ENCODE measurements at regions of chr17 and their contacts with region 1.

Region 1: GRCh38 chr17:34637548-34638525 is 58.5 kb downstream of the TMEM132E start:
- DNase-seq: peak; percentile 74 to 78 (median 77)
- H3K4me3 ChIP-seq: peak overlapping the region in 1 of 2 donors; percentile 59
- H3K4me3 Mint-ChIP-seq: peak overlapping the region; percentile 79 to 87 (median 84)
- H3K27ac ChIP-seq: no peak overlapping the region
- H3K27ac Mint-ChIP-seq: peak overlapping the region in 3 of 7 donors; percentile 23 to 80 (median 46)
- H3K4me1 ChIP-seq: peaks cover 14% of the 10 kb centered on the region
- H3K4me1 Mint-ChIP-seq: peaks cover 4 to 6% (median 4%) of the 10 kb centered on the region in 4 donors
- H3K27me3 ChIP-seq: peaks cover 5% of the 10 kb centered on the region
- H3K27me3 Mint-ChIP-seq: peaks cover 10 to 23% of the 10 kb centered on the region in 2 donors

Region 2: GRCh38 chr17:34420254-34420766 is 217.5 kb before region 1 on chr17:
- CTCF ChIA-PET with region 1: interaction called, 5 read pairs
- POLR2A ChIA-PET with region 1: no interaction called
- intact Hi-C with region 1: loop called (anchors 1 kb)
- DNase-seq: peak in 4 of 5 donors; percentile 47 to 59 (median 52)
- H3K4me3 ChIP-seq: no peak overlapping the region
- H3K4me3 Mint-ChIP-seq: no peak overlapping the region
- H3K27ac ChIP-seq: no peak overlapping the region
- H3K27ac Mint-ChIP-seq: no peak overlapping the region
- H3K4me1 ChIP-seq: no peaks in the 10 kb centered on the region
- H3K4me1 Mint-ChIP-seq: peaks cover 0 to 9% (median 3%) of the 10 kb centered on the region in 4 donors
- H3K27me3 ChIP-seq: no peaks in the 10 kb centered on the region
- H3K27me3 Mint-ChIP-seq: peaks cover 19 to 45% of the 10 kb centered on the region in 2 donors

Region 3: DNA sequence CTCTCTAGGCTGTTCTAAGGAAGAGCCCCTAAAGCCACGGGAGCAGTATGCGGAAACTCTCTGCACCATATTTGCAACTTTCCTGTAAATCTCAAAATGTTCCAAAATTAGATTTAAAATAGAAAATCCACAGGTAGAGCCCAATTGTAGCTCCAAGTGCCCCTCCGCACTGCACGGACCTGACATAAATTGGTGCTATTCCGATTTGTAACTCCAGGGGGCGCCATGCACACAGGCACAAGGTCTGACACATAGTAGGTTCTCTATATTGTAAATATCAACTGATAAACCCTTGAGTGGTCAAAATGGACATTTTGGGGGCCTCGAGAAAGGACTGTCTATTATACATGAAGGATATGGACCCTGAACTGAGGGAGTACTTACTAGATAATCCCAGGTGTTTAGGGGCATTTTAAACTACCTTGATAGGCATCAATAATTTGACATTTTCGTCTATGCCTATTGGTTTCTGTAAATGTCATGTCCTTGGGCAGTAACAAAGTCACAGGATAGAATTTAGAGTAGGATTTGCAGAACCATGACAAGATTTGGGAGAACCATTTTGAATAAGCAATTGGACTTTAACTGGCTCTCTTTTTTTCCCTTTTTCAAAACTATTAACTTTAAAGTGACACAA is 95.0 kb before region 1 on chr17:
- CTCF ChIA-PET with region 1: interaction called, 18 read pairs
- POLR2A ChIA-PET with region 1: no interaction called
- intact Hi-C with region 1: loop called (anchors 1 kb)
- DNase-seq: peak in 4 of 5 donors; percentile 41 to 52 (median 48)
- H3K4me3 ChIP-seq: no peak overlapping the region
- H3K4me3 Mint-ChIP-seq: no peak overlapping the region
- H3K27ac ChIP-seq: no peak overlapping the region
- H3K27ac Mint-ChIP-seq: no peak overlapping the region
- H3K4me1 ChIP-seq: no peaks in the 10 kb centered on the region
- H3K4me1 Mint-ChIP-seq: no peaks in the 10 kb centered on the region
- H3K27me3 ChIP-seq: no peaks in the 10 kb centered on the region
- H3K27me3 Mint-ChIP-seq: peaks cover 17 to 26% of the 10 kb centered on the region in 2 donors

Region 4: DNA sequence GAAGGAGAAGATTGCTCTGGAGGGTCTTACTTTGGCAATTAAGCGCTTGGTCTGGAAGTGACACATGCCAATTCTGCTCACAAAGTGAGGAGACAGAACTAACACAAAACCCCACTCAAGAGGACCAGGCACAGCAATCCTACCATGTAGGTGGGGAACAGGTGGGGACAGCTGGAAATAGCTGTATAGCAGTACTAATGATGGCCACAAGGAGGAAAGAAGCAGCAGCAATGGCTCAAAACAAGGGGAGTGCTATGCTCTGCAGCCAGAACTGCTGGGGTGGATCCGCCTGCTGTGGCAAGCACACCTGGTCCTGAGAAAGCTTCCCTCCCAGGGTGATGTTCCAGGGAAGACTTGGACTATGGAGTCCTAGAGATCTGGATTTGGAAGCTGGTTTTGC is 75.5 kb before region 1 on chr17:
- CTCF ChIA-PET with region 1: interaction called, 8 read pairs
- POLR2A ChIA-PET with region 1: no interaction called
- intact Hi-C with region 1: loop called (anchors 1 kb)
- DNase-seq: peak in 1 of 5 donors; percentile 22
- H3K4me3 ChIP-seq: no peak overlapping the region
- H3K4me3 Mint-ChIP-seq: no peak overlapping the region
- H3K27ac ChIP-seq: no peak overlapping the region
- H3K27ac Mint-ChIP-seq: no peak overlapping the region
- H3K4me1 ChIP-seq: no peaks in the 10 kb centered on the region
- H3K4me1 Mint-ChIP-seq: no peaks in the 10 kb centered on the region
- H3K27me3 ChIP-seq: peaks cover 14% of the 10 kb centered on the region
- H3K27me3 Mint-ChIP-seq: peaks cover 12 to 19% of the 10 kb centered on the region in 2 donors

Region 5: DNA sequence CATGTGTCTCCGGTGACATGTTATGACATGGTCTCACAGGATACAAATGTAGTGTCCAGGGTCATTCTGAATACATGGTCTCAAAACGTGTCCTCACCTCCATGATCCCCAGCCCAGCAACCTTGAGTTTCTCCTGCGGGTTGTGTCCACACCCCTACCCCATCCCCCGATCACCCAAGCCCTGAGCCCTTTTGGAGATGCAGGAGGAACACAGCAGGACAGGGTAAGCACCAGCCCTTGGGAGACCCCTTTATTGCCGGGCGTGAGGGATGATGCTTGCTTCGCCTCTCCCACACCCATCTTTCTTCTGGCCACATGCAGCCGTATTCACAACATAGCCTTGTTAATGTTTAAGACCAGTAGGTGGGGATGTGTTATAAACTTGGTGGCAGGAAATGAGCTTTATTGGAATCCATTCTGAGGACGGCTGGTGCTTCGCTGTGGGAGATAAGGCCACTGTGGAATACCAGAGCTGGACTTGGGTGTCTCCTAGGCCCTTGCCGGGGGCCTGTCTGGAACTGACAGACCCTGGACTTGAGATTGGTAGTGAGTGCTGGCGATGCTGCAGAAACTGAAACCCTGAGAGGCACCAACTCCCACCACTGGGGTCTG is 52.9 kb before region 1 on chr17:
- CTCF ChIA-PET with region 1: interaction called, 4 read pairs
- POLR2A ChIA-PET with region 1: no interaction called
- intact Hi-C with region 1: loop called (anchors 1 kb)
- DNase-seq: peak in 2 of 5 donors; percentile 10 to 16
- H3K4me3 ChIP-seq: no peak overlapping the region
- H3K4me3 Mint-ChIP-seq: no peak overlapping the region
- H3K27ac ChIP-seq: no peak overlapping the region
- H3K27ac Mint-ChIP-seq: no peak overlapping the region
- H3K4me1 ChIP-seq: peaks cover 10% of the 10 kb centered on the region
- H3K4me1 Mint-ChIP-seq: peaks cover 0 to 32% (median 3%) of the 10 kb centered on the region in 4 donors
- H3K27me3 ChIP-seq: peaks cover 27% of the 10 kb centered on the region
- H3K27me3 Mint-ChIP-seq: peaks cover 48 to 50% of the 10 kb centered on the region in 2 donors

Measured in CD4-positive, alpha-beta memory T cell (primary cell).